Activated naive CD4-positive, alpha-beta T cell treated with anti-CD3 and anti-CD28 coated beads for 36 hours (primary cell): ENCODE measurements at regions of chr4 and their contacts with region 1.

Region 1: DNA sequence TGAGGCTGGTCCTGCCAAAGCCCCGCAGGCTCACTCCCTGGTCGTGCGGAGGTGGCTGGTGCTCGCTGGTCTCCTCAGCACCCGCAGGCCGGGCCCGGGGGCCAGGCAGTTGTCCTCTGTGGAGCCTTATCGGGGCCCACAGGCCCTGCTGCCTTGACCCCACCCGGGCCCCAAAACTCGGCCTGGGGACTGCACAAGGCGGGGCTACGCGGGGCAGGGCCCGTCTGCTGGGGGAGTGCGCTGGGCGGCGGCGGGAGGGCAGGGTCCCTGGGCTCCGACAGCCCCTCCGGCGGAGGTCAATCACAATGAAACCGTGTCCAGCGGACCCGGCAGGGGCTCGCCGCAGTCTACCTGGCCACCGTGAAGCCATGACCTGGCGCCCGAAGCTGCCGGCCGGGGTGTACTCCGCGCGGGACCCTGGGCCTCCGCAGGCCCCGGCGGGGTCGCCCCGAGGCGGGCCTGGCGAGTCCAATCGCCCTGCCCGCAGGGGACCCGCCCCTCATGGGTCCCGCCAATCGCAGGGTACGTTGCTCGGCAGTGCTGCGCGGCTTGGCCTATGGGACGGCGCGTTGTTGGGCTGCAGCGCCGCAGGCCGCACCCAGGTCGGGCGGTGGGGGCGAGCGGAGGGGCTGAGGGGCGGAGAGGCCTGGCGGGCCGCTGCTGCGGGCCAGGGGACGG is at the start of gene ADD1:
- DNase-seq: peak; percentile 92
- H3K4me3 Mint-ChIP-seq: peak within 1 kb of the TSS; percentile 83
- H3K27ac Mint-ChIP-seq: peak within 1 kb of the TSS; percentile 91
- H3K4me1 Mint-ChIP-seq: peaks cover 58% of the 10 kb centered on the region
- H3K27me3 Mint-ChIP-seq: no peaks in the 10 kb centered on the region
- total RNA-seq, gene ADD1: 165 TPM

Region 2: DNA sequence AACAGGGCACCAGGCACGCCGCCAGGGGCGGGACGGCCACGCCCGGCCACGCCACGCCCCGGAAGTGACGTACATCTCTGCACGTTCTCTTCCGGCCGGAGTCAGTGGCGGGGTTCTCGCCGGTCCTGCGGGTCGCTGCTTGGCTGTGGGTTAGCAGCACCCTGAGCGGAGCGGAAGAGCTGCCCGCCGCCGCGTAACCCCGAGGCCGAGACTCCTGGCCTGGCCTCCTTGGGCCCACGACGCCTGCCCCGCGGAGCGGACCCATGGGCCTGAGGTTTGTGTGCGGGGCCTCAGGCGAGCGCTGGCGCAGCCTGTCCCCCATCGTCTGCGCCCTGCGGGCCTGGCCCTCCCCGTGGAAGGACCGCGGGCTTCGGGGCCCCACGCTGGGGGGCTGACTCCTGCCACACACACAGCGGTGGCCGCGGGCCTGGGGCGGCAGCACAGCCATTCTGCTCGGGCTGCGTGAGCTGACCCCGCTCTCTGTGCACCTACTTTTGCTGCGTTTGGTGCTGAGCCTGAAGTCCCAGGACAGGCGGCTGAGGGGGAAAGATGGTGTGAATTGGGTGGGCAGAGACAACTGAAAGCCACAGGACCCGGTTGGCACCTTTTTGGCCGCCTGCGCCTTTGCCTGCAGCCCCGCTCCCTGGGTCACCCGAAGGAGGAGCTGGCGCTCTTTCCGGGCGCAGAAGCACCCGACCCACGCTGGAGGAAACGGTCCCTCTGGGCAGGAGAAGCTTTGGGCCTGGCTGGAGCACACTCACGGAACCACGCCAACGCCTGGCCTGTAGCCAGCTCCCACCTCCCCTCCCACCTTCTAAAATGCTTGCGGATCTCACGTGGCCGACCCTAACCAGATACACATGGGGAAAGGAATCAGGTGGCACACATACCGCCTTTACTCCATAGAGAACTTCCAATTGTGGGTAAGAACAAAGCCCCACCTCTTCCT is 91.7 kb after region 1 on chr4:
- CTCF ChIA-PET with region 1: interaction called, 4 read pairs
- intact Hi-C with region 1: loop called (anchors 1 kb)
- DNase-seq: peak; percentile 97
- H3K4me3 Mint-ChIP-seq: peak overlapping the region; percentile 89
- H3K27ac Mint-ChIP-seq: peak overlapping the region; percentile 96
- H3K4me1 Mint-ChIP-seq: peaks cover 57% of the 10 kb centered on the region
- H3K27me3 Mint-ChIP-seq: no peaks in the 10 kb centered on the region

Region 3: DNA sequence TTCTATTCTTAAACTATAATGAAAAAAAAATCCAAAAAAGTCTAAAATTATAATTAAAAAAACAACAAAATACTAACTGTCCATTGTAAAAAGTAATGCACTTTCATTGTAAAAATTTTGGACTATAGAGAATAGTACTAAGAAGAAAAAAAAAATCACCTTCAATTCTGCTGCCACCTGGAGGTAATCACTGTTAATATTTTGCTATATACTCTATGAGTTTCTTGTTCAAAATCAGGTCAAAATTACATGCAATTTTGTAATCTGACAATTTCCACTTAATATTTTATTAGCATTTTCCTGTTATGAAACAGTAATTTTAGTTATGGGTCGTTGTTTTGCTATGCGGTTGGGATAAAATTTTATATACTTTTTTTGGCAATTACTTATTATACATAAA is 293.1 kb after region 1 on chr4:
- CTCF ChIA-PET with region 1: no interaction called
- intact Hi-C with region 1: no loop called
- DNase-seq: no peak
- H3K4me3 Mint-ChIP-seq: no peak overlapping the region
- H3K27ac Mint-ChIP-seq: no peak overlapping the region
- H3K4me1 Mint-ChIP-seq: no peaks in the 10 kb centered on the region
- H3K27me3 Mint-ChIP-seq: no peaks in the 10 kb centered on the region

Region 4: DNA sequence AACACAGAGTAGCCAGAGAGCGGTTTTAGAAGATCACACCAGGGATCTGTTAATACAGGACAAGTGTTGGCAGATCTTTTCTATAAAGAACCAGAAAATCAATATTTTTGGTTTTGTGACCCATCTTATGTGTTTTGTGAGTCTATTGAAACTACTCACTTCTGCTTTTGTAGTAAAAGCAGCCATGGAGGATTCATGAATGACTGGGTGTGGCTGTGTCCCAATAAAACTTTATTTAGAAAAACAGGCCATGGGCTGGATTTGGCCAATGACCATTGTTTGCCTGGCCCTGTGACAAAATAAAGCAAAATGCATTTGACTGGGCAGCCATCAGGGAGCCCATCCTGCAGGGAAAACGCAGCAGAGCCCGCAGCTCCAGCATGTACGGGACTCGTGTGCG is 822.9 kb after region 1 on chr4:
- CTCF ChIA-PET with region 1: no interaction called
- intact Hi-C with region 1: no loop called
- DNase-seq: no peak
- H3K4me3 Mint-ChIP-seq: no peak overlapping the region
- H3K27ac Mint-ChIP-seq: no peak overlapping the region
- H3K4me1 Mint-ChIP-seq: no peaks in the 10 kb centered on the region
- H3K27me3 Mint-ChIP-seq: no peaks in the 10 kb centered on the region